ENCODE measurements at regions of chr10 and their contacts with region 1.

Region 1: GRCh38 chr10:19710600-19710999 is 105.6 kb upstream of the PLXDC2 start:
- DNase-seq: no peak
- H3K4me3 ChIP-seq: no peak overlapping the region
- CTCF ChIP-seq: no peak
- POLR2A ChIP-seq: no peak

Region 2: GRCh38 chr10:17836942-17837341 is 1873.7 kb before region 1 on chr10:
- intact Hi-C with region 1: no loop called
- DNase-seq: no peak
- H3K4me3 ChIP-seq: no peak overlapping the region
- CTCF ChIP-seq: no peak
- POLR2A ChIP-seq: no peak

Region 3: DNA sequence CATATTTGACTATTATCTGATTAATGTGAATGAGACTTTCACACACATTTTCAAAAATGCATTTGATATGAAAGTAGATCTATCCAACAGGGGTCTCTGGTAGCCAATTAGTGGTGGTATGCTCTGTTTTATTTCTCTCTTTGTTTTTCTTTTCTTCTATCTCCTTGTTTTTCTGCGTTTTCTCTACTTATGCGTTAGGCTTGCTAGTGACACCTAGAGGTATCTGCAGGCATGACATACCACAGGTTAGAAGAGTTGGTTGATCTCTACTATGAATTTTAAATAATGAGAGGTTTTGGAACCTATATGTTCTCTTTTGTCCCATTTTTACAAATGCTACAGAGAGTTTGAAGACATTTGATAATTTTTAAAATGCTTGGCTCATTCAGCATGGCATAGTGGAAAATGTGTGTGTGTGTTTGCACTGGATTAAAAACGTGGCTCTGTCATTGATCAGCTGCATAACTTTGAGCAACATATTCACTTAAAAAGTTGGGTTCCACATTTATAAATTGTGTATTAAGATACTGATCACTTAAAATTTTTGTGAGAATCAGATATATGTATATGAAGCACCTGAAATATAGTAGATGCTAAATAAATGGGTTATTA is 77.6 kb after region 1 on chr10:
- intact Hi-C with region 1: loop called (anchors 2 kb)
- DNase-seq: peak in 1 of 2 donors; percentile 40
- H3K4me3 ChIP-seq: no peak overlapping the region
- CTCF ChIP-seq: peak in 1 of 3 donors; percentile 39
- POLR2A ChIP-seq: no peak

Measured in lower leg skin (tissue), 4 donors.